GM10248 (cell line): ENCODE measurements at regions of chr9 and their contacts with region 1.

Region 1: DNA sequence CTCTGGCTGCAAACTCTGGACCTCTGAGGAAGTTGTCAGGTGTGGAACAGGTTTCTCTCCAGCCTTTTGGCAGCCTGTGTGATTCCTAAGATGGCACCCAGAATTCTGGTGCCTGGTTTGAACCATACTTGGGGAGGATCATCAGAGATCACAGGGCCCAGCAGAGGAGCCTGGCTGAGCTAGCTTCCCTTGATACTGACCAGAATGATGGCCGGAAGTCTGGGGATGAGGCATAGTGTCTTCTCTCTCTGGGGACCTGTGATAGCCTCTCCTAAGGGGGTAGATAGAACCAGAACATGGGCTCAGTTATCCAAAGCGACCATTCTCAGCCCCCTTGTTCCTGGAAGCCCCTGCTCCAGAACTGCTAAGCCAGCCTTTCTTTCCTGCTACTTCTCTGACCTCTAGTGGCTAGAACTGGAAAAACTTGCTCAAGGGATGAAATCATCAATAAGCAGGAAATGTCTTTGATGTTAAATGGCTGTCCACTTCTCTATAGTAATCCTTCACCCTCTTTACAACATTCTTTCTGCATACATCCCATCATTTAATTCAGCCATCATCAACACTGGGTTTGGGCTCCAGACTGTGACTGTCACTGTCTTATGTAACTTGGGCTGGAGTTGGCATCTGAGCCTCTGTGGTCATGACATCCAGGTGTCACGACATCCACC is 55.1 kb downstream of the C9orf152 start:
- DNase-seq: no peak
- CTCF ChIP-seq: peak; percentile 71

Region 2: DNA sequence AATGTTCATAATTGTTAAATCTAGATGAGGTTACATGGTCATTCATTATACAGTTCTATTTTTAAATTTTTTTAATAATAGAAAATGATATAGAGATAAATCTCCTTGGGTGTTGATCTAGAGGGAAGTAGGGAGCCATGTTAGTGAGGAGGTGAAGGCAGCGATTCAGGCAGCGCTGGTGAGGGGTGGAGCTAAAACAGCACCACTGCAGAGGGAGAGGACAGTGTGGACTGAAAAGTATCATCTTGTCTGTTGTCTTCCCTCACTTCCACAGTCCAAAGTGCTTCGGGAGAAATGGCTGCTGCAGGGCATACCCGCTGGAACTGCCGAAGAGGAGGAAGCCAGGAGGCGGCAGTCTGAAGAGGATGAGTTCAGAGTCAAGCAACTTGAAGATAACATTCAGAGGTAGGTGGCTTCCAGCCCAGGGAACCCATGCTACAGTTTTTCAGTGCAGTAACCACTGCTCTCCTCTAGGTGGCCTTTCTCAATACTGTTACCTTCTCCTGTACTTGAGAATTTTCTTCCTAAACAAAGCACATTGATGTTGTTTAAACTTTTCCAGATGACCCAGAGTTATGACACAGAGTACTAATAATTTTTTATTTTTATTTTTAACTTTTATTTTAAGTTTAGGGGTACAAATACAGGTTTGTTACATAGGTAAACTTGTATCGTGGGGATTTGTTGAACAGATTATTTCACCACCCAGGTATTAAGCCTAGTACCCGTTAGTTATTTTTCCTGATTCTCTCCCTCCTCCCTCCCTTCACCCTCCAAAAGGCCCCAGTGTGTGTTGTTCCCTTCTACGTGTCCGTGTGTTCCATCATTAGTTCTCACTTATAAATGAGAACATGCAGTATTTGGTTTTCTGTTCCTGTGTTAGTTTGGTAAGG is 272.3 kb before region 1 on chr9:
- CTCF ChIA-PET with region 1: interaction called, 10 read pairs
- POLR2A ChIA-PET with region 1: interaction called, 5 read pairs
- DNase-seq: peak; percentile 56
- CTCF ChIP-seq: peak; percentile 57

Region 3: DNA sequence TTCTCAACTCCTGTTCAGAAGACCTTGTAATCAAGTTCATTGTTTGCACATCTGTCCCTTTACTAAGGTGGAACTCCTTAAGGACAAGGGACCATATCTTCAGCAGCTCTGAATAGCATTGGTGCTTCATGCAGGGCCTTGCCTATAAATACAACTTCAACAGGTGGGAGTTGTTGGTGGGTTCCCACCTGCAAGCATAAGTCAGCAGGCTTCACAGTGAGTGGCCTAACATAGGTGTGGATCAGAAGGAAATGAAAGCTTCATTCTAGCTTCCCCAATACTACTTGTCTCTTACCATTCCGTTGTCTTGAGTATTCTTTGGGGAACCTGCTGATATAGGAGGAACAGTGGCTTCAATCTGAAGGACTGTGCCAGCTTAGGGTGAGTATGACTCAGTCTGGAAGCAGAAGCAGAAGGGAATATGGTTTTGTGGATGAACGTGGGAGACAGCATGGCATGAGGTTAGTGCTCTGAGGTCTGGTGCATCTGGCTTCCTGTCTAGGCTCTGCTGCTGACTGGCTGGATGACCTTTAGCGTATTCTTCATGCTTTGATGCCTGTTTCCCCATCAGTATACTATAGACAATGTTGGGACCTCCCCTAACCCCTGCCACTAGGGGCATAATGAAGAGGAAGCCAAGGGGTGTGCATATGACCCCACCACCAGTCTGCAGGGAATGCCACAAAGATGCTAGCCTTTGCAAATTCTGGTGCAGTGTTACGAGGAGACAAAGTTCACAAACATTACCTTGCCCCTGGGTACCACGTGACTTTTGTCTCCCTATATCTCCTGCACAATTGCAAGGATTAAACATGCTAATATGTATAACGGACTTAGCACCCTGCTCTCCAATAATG is 180.6 kb before region 1 on chr9:
- CTCF ChIA-PET with region 1: interaction called, 23 read pairs
- POLR2A ChIA-PET with region 1: no interaction called
- DNase-seq: peak; percentile 37
- CTCF ChIP-seq: no peak

Region 4: GRCh38 chr9:110125207-110125751 is 27.6 kb before region 1 on chr9:
- CTCF ChIA-PET with region 1: interaction called, 10 read pairs
- POLR2A ChIA-PET with region 1: no interaction called
- DNase-seq: no peak
- CTCF ChIP-seq: no peak

Region 5: GRCh38 chr9:110133608-110134210 is 19.1 kb before region 1 on chr9:
- CTCF ChIA-PET with region 1: interaction called, 25 read pairs
- POLR2A ChIA-PET with region 1: interaction called, 3 read pairs
- DNase-seq: no peak
- CTCF ChIP-seq: no peak